HEK293 (cell line): ENCODE measurements at regions of chr14 and their contacts with region 1.

Region 1: DNA sequence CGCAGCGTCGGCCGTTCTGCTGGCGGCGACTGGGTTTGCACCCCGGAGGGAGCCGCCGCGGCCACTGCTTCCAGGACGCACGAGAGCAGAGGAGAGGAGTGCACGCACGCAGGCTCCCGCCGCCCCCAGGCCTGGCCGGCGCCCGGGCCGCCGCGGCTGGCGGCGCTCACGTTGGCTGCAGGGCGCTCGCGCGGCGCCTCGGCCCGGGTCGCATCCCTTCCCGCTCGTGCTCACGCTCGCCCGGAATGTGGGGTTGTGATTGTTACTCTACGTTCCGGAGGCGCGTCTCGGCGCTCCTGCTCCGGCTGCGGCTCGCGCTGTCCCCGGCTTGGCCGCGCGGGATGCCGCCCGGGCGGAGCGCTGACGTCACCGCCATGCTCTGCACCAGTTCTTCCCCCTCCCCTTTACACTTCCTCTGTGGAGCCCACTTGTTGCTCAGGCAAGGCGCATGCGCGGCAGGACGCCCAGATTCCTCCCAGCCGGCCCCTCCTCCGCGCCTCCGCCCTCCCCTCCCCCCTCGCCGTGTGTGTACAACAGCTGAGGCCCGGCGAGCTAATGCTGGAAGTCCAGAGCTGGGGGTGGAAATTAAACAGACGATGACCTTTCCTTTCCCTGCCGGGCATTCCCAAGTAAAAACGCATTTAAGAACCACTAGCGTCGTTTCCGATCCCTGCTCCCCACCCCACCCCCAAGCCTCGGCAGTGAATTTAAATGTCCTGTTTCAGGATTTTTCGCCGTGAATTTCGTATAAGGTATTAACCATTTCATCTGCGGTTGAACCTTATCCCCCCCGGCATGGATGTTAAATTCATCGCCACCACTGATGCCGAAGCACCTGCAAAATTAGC is at the start of gene IRF2BPL:
- H3K4me3 ChIP-seq: peak within 1 kb of the TSS; percentile 85
- H3K27ac ChIP-seq: peak within 1 kb of the TSS; percentile 100
- H3K4me1 ChIP-seq: peaks cover 26% of the 10 kb centered on the region
- CTCF ChIP-seq: no peak

Region 2: GRCh38 chr14:76962303-76962660 is 66.3 kb before region 1 on chr14:
- CTCF ChIA-PET with region 1: interaction called, 4 read pairs
- POLR2A ChIA-PET with region 1: interaction called, 18 read pairs
- H3K4me3 ChIP-seq: peak overlapping the region; percentile 11
- H3K27ac ChIP-seq: peak overlapping the region; percentile 87
- H3K4me1 ChIP-seq: peaks cover 20% of the 10 kb centered on the region
- CTCF ChIP-seq: no peak

Region 3: DNA sequence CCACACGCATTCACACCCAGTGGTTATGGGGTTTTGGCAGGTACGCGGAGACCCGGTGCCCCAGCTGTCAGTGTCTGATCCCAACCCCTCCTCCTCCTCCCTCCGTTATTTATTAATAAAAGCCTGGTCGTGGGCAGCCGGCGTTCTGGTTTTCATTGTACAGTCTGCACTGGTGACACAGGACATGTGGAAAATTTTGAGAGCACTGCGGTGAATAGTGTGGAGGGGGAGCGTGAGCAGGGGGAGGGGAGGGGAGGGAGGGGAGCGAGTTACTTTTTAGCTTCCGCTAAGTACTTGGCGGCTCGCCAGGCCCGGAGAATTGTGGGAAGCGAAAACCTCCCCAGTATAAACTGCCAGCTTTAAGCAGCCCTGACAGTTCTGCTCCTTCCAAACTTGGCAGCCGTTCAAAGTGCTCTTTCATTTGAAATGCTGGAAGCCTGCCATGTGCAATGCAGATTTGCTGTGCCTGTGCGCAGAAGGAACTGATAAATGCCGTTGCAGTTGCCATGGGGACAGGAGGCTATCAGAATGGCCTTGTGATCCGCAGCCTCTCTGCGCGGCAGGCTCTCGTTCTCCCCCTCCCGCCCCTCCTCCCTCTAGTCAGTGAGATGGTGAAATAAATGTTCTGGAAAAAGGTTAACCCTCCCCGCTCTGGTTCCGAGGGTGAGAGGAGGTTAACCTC is 11.6 kb after region 1 on chr14:
- CTCF ChIA-PET with region 1: interaction called, 7 read pairs
- POLR2A ChIA-PET with region 1: interaction called, 42 read pairs
- H3K4me3 ChIP-seq: peak overlapping the region; percentile 29
- H3K27ac ChIP-seq: peak overlapping the region; percentile 97
- H3K4me1 ChIP-seq: peaks cover 69% of the 10 kb centered on the region
- CTCF ChIP-seq: no peak

Region 4: GRCh38 chr14:77133720-77134338 is 105.2 kb after region 1 on chr14:
- CTCF ChIA-PET with region 1: no interaction called
- POLR2A ChIA-PET with region 1: no interaction called
- H3K4me3 ChIP-seq: no peak overlapping the region
- H3K27ac ChIP-seq: no peak overlapping the region
- H3K4me1 ChIP-seq: no peaks in the 10 kb centered on the region
- CTCF ChIP-seq: no peak

Region 5: GRCh38 chr14:77268989-77269600 is 240.5 kb after region 1 on chr14:
- CTCF ChIA-PET with region 1: no interaction called
- POLR2A ChIA-PET with region 1: no interaction called
- H3K4me3 ChIP-seq: no peak overlapping the region
- H3K27ac ChIP-seq: no peak overlapping the region
- H3K4me1 ChIP-seq: no peaks in the 10 kb centered on the region
- CTCF ChIP-seq: no peak